OCI-LY7 (cell line): ENCODE measurements at regions of chr1 and their contacts with region 1.

Region 1: GRCh38 chr1:6991266-6991665 is 206.0 kb downstream of the CAMTA1 start:
- DNase-seq: no peak
- H3K4me3 ChIP-seq: no peak overlapping the region
- H3K27ac ChIP-seq: no peak overlapping the region
- H3K4me1 ChIP-seq: no peaks in the 10 kb centered on the region
- CTCF ChIP-seq: no peak

Region 2: DNA sequence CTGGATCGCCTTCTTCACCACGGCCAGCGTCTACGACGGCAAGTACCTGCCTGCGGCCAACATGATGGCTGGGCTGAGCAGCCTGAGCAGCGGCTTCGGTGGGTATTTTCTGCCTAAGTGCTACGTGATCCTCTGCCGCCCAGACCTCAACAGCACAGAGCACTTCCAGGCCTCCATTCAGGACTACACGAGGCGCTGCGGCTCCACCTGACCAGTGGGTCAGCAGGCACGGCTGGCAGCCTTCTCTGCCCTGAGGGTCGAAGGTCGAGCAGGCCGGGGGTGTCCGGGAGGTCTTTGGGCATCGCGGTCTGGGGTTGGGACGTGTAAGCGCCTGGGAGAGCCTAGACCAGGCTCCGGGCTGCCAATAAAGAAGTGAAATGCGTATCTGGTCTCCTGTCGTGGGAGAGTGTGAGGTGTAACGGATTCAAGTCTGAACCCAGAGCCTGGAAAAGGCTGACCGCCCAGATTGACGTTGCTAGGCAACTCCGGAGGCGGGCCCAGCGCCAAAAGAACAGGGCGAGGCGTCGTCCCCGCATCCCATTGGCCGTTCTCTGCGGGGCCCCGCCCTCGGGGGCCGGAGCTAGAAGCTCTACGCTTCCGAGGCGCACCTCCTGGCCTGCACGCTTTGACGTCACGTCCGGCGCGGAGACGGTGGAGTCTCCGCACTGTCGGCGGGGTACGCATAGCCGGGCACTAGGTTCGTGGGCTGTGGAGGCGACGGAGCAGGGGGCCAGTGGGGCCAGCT is 411.7 kb before region 1 on chr1 and contains the start of gene ZBTB48:
- CTCF ChIA-PET with region 1: interaction called, 10 read pairs
- POLR2A ChIA-PET with region 1: no interaction called
- intact Hi-C with region 1: no loop called
- DNase-seq: peak; percentile 98
- H3K4me3 ChIP-seq: peak within 1 kb of the TSS; percentile 86
- H3K27ac ChIP-seq: peak within 1 kb of the TSS; percentile 38
- H3K4me1 ChIP-seq: peaks cover 29% of the 10 kb centered on the region
- CTCF ChIP-seq: no peak
- total RNA-seq, gene ZBTB48: 28.9 and 41.9 TPM in 2 replicates

Region 3: GRCh38 chr1:7040969-7041695 is 49.9 kb after region 1 on chr1:
- CTCF ChIA-PET with region 1: no interaction called
- POLR2A ChIA-PET with region 1: no interaction called
- intact Hi-C with region 1: no loop called
- DNase-seq: no peak
- H3K4me3 ChIP-seq: no peak overlapping the region
- H3K27ac ChIP-seq: no peak overlapping the region
- H3K4me1 ChIP-seq: no peaks in the 10 kb centered on the region
- CTCF ChIP-seq: no peak